Cardiac septum (tissue), 1 donor: ENCODE measurements at regions of chr10 and their contacts with region 1.

Region 1: GRCh38 chr10:87861953-87862678 is 1.2 kb downstream of the KLLN start:
- DNase-seq: peak; percentile 97

Region 2: GRCh38 chr10:87817609-87818504 is 44.3 kb before region 1 on chr10 and contains the start of gene ATAD1:
- intact Hi-C with region 1: loop called (anchors 5 kb)
- DNase-seq: peak; percentile 94
- total RNA-seq, gene ATAD1: 92.0 TPM

Region 3: DNA sequence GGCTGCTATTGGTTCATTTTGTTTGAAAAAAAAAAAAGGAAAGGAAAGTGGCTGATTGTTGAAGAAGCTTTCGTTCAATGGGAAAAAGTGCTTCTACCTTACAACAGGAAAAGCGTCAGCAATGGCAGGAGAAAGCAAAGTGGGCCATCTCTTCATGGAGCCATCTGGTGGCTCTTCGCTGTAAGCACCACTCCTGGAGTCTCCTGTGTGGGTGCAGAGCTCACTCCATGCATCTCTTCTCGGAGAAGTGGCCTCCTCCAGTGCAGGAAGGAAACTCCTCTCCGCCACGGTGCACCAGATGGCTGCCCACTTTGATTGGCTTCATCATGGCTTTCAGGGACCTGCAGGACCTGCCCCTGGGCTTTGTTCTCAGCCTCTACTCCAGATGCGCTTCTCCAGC is 252.3 kb after region 1 on chr10:
- intact Hi-C with region 1: loop called (anchors 2 kb)
- DNase-seq: no peak

Region 4: GRCh38 chr10:88243836-88244730 is 382.0 kb after region 1 on chr10:
- intact Hi-C with region 1: loop called (anchors 2 kb)
- DNase-seq: peak; percentile 78

Region 5: GRCh38 chr10:88386821-88387773 is 525.0 kb after region 1 on chr10:
- intact Hi-C with region 1: loop called (anchors 2 kb)
- DNase-seq: no peak

Region 6: GRCh38 chr10:88553116-88553752 is 691.1 kb after region 1 on chr10:
- intact Hi-C with region 1: loop called (anchors 5 kb)
- DNase-seq: no peak